Breast epithelium (tissue), 4 donors: ENCODE measurements at regions of chrX and their contacts with region 1.

Region 1: GRCh38 chrX:128664211-128664610 is 612.0 kb upstream of the ACTRT1 start:
- DNase-seq: no peak
- H3K4me3 ChIP-seq: no peak overlapping the region
- H3K27ac ChIP-seq: no peak overlapping the region
- H3K4me1 ChIP-seq: no peaks in the 10 kb centered on the region
- H3K27me3 ChIP-seq: peaks cover 0 to 3% of the 10 kb centered on the region in 2 donors
- CTCF ChIP-seq: no peak
- POLR2A ChIP-seq: no peak

Region 2: GRCh38 chrX:128634754-128635153 is 29.5 kb before region 1 on chrX:
- intact Hi-C with region 1: no loop called
- DNase-seq: no peak
- H3K4me3 ChIP-seq: no peak overlapping the region
- H3K27ac ChIP-seq: no peak overlapping the region
- H3K4me1 ChIP-seq: no peaks in the 10 kb centered on the region
- H3K27me3 ChIP-seq: peaks cover 0 to 5% of the 10 kb centered on the region in 2 donors
- CTCF ChIP-seq: no peak
- POLR2A ChIP-seq: no peak

Region 3: GRCh38 chrX:128975745-128976144 is 311.5 kb after region 1 on chrX:
- intact Hi-C with region 1: no loop called
- DNase-seq: no peak
- H3K4me3 ChIP-seq: no peak overlapping the region
- H3K27ac ChIP-seq: no peak overlapping the region
- H3K4me1 ChIP-seq: no peaks in the 10 kb centered on the region
- H3K27me3 ChIP-seq: peaks cover 0 to 14% of the 10 kb centered on the region in 2 donors
- CTCF ChIP-seq: peak in 2 of 3 donors; percentile 13 to 24
- POLR2A ChIP-seq: no peak

Region 4: GRCh38 chrX:129654419-129655165 is 990.4 kb after region 1 on chrX and contains the start of gene APLN:
- intact Hi-C with region 1: loop called (anchors 5 kb)
- DNase-seq: peak in 1 of 2 donors; percentile 16
- H3K4me3 ChIP-seq: peak within 1 kb of the TSS; percentile 45 to 68 (median 50)
- H3K27ac ChIP-seq: no peak within 1 kb of the TSS
- H3K4me1 ChIP-seq: no peaks in the 10 kb centered on the region
- H3K27me3 ChIP-seq: peaks cover 0 to 60% of the 10 kb centered on the region in 2 donors
- CTCF ChIP-seq: no peak
- POLR2A ChIP-seq: no peak
- total RNA-seq, gene APLN: 0.16 to 5.9 (median 4.5) TPM